HEK293T (cell line): ENCODE measurements at regions of chr17 and their contacts with region 1.

Region 1: DNA sequence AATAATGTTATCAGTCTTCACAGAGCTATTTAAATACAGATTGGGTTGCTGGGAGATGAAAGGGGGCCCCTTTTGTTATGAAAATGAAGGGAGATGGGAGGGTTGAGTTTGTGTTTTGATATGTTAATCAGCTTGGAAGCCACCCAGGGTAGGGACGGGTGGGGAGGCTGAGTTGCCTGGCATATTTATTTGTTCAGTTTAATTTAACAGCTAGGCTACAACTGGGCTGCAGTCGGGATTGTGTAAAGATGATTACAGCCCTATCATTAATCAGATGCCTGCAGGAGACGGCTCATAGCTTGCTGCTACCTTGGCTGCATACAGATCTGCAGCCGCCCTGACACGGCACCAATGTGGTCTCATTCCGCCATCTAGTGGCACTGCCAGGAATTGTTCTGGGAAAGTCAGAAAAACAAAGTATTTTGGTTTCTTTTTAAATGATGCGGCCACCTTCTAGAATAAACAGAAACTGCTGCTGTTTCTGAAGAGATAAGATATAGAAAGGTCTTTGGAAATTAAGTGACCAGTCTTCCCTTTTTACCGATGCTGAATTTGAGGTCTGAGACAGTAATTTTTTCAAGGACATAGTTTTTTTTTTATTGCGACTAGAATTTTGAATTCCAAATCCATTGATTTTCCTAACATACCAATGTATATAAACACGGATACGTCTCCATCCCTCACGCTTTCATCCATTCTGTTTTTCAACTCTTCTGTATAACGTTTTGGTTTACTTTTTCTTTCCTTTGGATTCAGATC is 458.0 kb upstream of the ASIC2 start:
- DNase-seq: peak; percentile 49

Region 2: GRCh38 chr17:33725675-33726271 is 25.3 kb before region 1 on chr17:
- CTCF ChIA-PET with region 1: interaction called, 11 read pairs
- POLR2A ChIA-PET with region 1: no interaction called
- DNase-seq: peak; percentile 47